Cardiac septum (tissue), 1 donor: ENCODE measurements at regions of chr20 and their contacts with region 1.

Region 1: GRCh38 chr20:57089691-57090150 is 176.7 kb downstream of the BMP7 start:
- DNase-seq: no peak

Region 2: GRCh38 chr20:56893226-56893912 is 196.4 kb before region 1 on chr20:
- intact Hi-C with region 1: no loop called
- DNase-seq: no peak

Region 3: DNA sequence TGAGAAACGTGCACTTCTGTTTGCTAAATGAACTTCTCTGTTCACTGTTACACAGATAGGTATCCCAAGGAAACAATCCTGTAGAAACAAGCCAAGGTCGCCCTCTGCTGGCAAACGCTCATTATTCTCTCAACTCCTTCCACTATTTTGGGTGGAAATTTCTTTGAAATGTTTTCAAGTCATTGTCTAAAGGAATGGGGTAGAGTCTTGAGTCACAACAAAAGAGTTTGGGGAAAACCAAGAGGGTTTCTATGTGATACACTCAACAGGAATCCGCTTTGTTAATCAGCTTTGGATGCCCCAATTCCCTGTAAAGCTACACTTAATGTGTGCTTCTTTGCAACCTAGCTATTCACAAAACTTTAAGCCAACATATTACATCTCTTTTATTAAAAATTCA is 256.8 kb after region 1 on chr20:
- intact Hi-C with region 1: loop called (anchors 1 kb)
- DNase-seq: no peak

Region 4: GRCh38 chr20:57498425-57499400 is 409.0 kb after region 1 on chr20:
- intact Hi-C with region 1: loop called (anchors 10 kb)
- DNase-seq: peak; percentile 78